ENCODE measurements at regions of chr5 and their contacts with region 1.

Region 1: GRCh38 chr5:163165277-163165676 is 272.1 kb upstream of the CCNG1 start:
- DNase-seq: no peak
- ATAC-seq: no peak
- H3K4me3 Mint-ChIP-seq: no peak overlapping the region
- H3K27ac Mint-ChIP-seq: no peak overlapping the region
- H3K4me1 Mint-ChIP-seq: no peaks in the 10 kb centered on the region
- H3K27me3 Mint-ChIP-seq: no peaks in the 10 kb centered on the region

Region 2: GRCh38 chr5:163205645-163206044 is 40.4 kb after region 1 on chr5:
- CTCF ChIA-PET with region 1: no interaction called
- POLR2A ChIA-PET with region 1: no interaction called
- intact Hi-C with region 1: loop called in 1 of 2 experiments (anchors 1 kb)
- DNase-seq: no peak
- ATAC-seq: no peak
- H3K4me3 Mint-ChIP-seq: no peak overlapping the region
- H3K27ac Mint-ChIP-seq: no peak overlapping the region
- H3K4me1 Mint-ChIP-seq: no peaks in the 10 kb centered on the region
- H3K27me3 Mint-ChIP-seq: no peaks in the 10 kb centered on the region